CD4-positive, alpha-beta memory T cell (primary cell): ENCODE measurements at regions of chr4 and their contacts with region 1.

Region 1: GRCh38 chr4:48127682-48128394 is 6.2 kb downstream of the TXK start:
- DNase-seq: peak; percentile 61 to 72 (median 69)
- H3K4me3 ChIP-seq: peak overlapping the region; percentile 0 to 41
- H3K4me3 Mint-ChIP-seq: peak overlapping the region; percentile 71 to 95 (median 84)
- H3K27ac ChIP-seq: peak overlapping the region; percentile 46
- H3K27ac Mint-ChIP-seq: peak overlapping the region; percentile 78 to 96 (median 94)
- H3K4me1 ChIP-seq: peaks cover 89% of the 10 kb centered on the region
- H3K4me1 Mint-ChIP-seq: peaks cover 65 to 98% (median 83%) of the 10 kb centered on the region in 4 donors
- H3K27me3 ChIP-seq: no peaks in the 10 kb centered on the region
- H3K27me3 Mint-ChIP-seq: no peaks in the 10 kb centered on the region

Region 2: DNA sequence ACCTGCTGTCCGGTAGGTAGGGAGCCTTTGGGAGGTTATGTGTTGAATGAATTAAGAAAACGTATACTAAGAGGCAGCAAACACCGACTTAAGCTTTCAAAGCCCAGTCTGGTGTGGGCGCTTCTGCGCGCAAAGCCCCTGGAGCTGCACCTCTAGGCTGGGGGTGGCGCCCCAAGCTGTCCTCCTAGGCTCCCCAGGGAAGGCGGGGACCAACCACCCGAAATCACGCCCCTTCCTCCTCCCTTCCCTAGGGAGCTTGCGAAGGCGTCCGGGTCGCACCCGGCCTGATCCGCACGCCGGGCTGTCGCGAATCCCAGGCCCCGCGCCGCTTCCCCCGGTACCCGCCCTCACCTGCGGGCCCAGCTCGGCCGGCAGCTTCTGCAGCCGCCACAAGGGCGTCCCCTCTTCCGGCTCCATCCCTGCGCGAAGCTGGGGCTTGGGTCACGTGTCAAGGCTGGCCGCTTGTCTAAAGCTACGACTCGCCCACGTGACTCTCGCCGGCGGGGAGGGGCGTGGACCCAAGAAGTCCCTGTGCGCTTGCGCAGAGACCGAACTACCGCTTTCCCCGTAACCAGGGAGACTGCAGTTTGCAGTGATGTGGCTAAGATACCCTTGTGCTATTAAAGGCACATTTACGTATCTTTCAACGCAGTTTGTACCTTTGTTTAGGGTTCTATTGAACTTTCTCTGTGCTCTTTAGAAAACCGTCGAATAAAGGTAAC is 664.4 kb before region 1 on chr4 and contains the start of gene COMMD8:
- CTCF ChIA-PET with region 1: no interaction called
- POLR2A ChIA-PET with region 1: interaction called, 3 read pairs
- intact Hi-C with region 1: loop called (anchors 10 kb)
- DNase-seq: peak; percentile 96 to 98 (median 97)
- H3K4me3 ChIP-seq: peak within 1 kb of the TSS; percentile 48 to 92
- H3K4me3 Mint-ChIP-seq: peak within 1 kb of the TSS; percentile 88 to 92 (median 90)
- H3K27ac ChIP-seq: peak within 1 kb of the TSS; percentile 79
- H3K27ac Mint-ChIP-seq: peak within 1 kb of the TSS; percentile 90 to 99 (median 96)
- H3K4me1 ChIP-seq: peaks cover 24% of the 10 kb centered on the region
- H3K4me1 Mint-ChIP-seq: peaks cover 26 to 42% (median 36%) of the 10 kb centered on the region in 4 donors
- H3K27me3 ChIP-seq: no peaks in the 10 kb centered on the region
- H3K27me3 Mint-ChIP-seq: peaks cover 0 to 2% of the 10 kb centered on the region in 2 donors
- total RNA-seq, gene COMMD8: 14.6 to 18.3 TPM

Region 3: DNA sequence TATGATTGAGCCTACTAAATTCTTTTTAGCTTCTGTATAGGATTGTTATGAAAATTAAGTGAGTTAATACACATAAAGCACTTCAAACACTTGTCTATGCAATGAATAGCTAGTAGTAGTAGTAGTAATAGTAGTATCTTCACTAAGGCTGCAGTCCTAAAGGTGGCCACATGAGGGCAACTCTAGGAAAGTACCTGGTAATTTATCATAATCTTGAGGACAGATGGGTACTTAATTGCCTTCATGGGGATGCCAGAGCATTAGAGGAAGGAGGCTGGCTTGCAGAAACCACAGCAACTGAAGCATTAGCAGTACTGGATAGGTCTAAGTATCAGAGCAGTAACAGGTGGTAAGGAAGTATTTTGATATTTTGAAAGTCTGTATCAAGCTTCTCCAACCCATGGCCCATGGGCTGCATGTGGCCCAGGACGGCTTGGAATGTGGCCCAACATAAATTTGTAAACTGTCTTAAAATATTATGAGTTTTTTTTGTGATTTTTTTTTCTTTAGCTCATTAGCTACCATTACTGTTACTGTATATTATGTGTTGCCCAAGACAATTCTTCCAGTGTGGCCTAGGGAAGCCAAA is 93.9 kb before region 1 on chr4:
- CTCF ChIA-PET with region 1: interaction called, 12 read pairs
- POLR2A ChIA-PET with region 1: no interaction called
- intact Hi-C with region 1: no loop called
- DNase-seq: peak; percentile 49 to 67 (median 58)
- H3K4me3 ChIP-seq: no peak overlapping the region
- H3K4me3 Mint-ChIP-seq: no peak overlapping the region
- H3K27ac ChIP-seq: no peak overlapping the region
- H3K27ac Mint-ChIP-seq: no peak overlapping the region
- H3K4me1 ChIP-seq: no peaks in the 10 kb centered on the region
- H3K4me1 Mint-ChIP-seq: peaks cover 2 to 12% (median 3%) of the 10 kb centered on the region in 4 donors
- H3K27me3 ChIP-seq: no peaks in the 10 kb centered on the region
- H3K27me3 Mint-ChIP-seq: no peaks in the 10 kb centered on the region

Region 4: DNA sequence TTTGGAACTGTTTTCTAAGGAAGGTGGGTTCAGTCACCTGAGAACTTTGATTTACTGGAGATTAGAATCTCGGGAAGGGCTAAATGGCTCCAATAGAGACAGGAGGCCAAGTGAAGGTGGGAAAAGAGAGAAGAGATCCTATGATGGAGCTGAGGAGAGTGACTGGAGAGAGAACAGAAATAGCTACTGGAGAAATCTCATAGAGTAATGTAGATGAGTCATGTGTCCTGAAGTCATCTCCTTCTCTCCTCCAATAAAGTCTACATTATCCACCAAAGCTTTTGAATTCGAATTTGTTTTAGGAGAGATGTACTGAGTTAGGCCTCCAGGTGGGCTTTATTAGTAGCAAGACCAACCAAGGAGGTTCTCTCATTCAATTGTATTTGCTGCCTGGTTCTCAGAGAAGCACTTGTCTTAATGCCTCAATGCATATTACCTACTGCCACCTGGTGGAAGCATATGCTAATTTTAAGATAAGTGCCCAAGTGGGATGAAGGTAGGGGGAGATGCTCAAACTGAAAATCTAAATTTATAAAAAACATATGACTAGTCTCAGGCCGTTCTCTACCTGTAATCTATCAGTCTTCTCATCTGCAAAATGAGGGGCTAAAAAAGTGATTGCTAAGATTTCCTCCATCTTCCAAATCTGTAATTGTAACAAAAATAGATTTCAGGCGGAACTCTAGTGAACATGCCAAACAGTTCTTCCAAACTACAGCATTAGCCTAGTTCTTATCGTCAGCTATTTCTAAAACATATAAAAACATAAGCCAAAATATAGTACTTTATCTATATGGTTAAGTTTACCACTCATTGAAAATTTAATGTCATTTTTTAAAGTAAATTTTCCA is 18.2 kb before region 1 on chr4:
- CTCF ChIA-PET with region 1: interaction called, 28 read pairs
- POLR2A ChIA-PET with region 1: interaction called, 4 read pairs
- intact Hi-C with region 1: loop called (anchors 2 kb)
- DNase-seq: peak in 4 of 5 donors; percentile 42 to 50 (median 48)
- H3K4me3 ChIP-seq: no peak overlapping the region
- H3K4me3 Mint-ChIP-seq: no peak overlapping the region
- H3K27ac ChIP-seq: no peak overlapping the region
- H3K27ac Mint-ChIP-seq: peak overlapping the region in 3 of 7 donors; percentile 7 to 52 (median 11)
- H3K4me1 ChIP-seq: peaks cover 38% of the 10 kb centered on the region
- H3K4me1 Mint-ChIP-seq: peaks cover 25 to 35% (median 31%) of the 10 kb centered on the region in 4 donors
- H3K27me3 ChIP-seq: no peaks in the 10 kb centered on the region
- H3K27me3 Mint-ChIP-seq: no peaks in the 10 kb centered on the region

Region 5: DNA sequence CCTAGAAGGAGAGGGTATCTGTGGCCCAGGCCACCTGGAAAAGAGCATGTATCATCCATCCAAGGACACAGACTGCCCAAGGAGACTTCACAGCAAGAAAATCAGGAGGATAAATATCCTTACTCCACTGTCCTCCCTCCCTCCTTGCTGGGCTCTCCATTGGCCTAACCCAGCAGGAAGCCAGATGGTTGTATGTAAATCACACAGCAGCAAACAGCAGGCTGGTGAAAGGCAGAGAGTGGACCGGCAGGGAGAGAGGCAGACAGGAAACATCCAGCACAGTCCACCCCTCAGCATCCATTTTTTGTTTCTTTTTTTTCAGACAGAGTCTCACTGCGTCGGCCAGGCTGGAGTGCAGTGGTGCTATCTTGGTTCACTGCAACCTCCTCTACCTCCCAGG is 11.3 kb before region 1 on chr4:
- CTCF ChIA-PET with region 1: interaction called, 22 read pairs
- POLR2A ChIA-PET with region 1: interaction called, 4 read pairs
- intact Hi-C with region 1: loop called (anchors 2 kb)
- DNase-seq: no peak
- H3K4me3 ChIP-seq: no peak overlapping the region
- H3K4me3 Mint-ChIP-seq: peak overlapping the region in 1 of 8 donors; percentile 4
- H3K27ac ChIP-seq: no peak overlapping the region
- H3K27ac Mint-ChIP-seq: peak overlapping the region; percentile 15 to 71 (median 37)
- H3K4me1 ChIP-seq: peaks cover 76% of the 10 kb centered on the region
- H3K4me1 Mint-ChIP-seq: peaks cover 58 to 71% (median 65%) of the 10 kb centered on the region in 4 donors
- H3K27me3 ChIP-seq: no peaks in the 10 kb centered on the region
- H3K27me3 Mint-ChIP-seq: no peaks in the 10 kb centered on the region

Region 6: DNA sequence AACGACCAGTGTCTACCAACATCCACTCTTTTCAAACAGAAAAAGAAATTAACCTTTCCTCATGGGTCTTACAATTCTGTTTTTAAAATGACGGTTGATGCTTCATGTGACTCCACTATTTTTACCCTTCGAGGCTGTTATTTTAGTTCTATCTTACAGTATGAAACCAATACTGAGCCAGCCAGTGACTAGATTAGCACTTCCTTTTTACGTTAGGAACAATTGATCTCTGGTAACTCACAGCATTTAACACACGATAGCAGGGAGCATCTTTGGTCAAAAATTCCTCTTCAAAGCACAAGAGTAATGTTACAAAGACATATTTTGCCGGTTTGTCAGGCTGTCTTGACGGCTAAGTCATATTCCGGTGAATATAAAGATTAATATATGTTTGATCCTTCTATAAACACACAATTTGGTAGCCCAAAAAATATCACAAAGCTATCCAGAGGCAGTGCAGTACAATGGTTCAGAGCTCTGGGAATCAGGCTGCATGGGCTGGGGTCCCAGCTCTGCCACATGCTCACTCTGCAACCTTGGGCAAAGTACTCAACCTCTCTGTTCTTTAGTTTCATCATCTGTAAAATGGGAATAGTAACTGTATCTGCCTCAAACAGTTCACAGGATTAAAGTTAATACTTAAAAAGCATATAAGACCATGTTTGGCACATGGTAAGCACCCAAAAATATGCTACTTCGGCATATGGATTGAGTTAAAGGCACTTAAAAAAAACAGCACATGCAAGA is 69.1 kb after region 1 on chr4:
- CTCF ChIA-PET with region 1: no interaction called
- POLR2A ChIA-PET with region 1: no interaction called
- intact Hi-C with region 1: no loop called
- DNase-seq: no peak
- H3K4me3 ChIP-seq: no peak overlapping the region
- H3K4me3 Mint-ChIP-seq: no peak overlapping the region
- H3K27ac ChIP-seq: no peak overlapping the region
- H3K27ac Mint-ChIP-seq: no peak overlapping the region
- H3K4me1 ChIP-seq: no peaks in the 10 kb centered on the region
- H3K4me1 Mint-ChIP-seq: peaks cover 1 to 10% (median 7%) of the 10 kb centered on the region in 4 donors
- H3K27me3 ChIP-seq: no peaks in the 10 kb centered on the region
- H3K27me3 Mint-ChIP-seq: peaks cover 4 to 7% of the 10 kb centered on the region in 2 donors

Region 7: GRCh38 chr4:48269861-48270522 is 142.2 kb after region 1 on chr4:
- CTCF ChIA-PET with region 1: interaction called, 15 read pairs
- POLR2A ChIA-PET with region 1: interaction called, 4 read pairs
- intact Hi-C with region 1: loop called (anchors 5 kb)
- DNase-seq: peak; percentile 74 to 86 (median 77)
- H3K4me3 ChIP-seq: peak overlapping the region; percentile 50 to 59
- H3K4me3 Mint-ChIP-seq: peak overlapping the region; percentile 91 to 98 (median 96)
- H3K27ac ChIP-seq: peak overlapping the region; percentile 48
- H3K27ac Mint-ChIP-seq: peak overlapping the region; percentile 82 to 93 (median 90)
- H3K4me1 ChIP-seq: peaks cover 14% of the 10 kb centered on the region
- H3K4me1 Mint-ChIP-seq: peaks cover 9 to 24% (median 10%) of the 10 kb centered on the region in 4 donors
- H3K27me3 ChIP-seq: no peaks in the 10 kb centered on the region
- H3K27me3 Mint-ChIP-seq: no peaks in the 10 kb centered on the region

Region 8: DNA sequence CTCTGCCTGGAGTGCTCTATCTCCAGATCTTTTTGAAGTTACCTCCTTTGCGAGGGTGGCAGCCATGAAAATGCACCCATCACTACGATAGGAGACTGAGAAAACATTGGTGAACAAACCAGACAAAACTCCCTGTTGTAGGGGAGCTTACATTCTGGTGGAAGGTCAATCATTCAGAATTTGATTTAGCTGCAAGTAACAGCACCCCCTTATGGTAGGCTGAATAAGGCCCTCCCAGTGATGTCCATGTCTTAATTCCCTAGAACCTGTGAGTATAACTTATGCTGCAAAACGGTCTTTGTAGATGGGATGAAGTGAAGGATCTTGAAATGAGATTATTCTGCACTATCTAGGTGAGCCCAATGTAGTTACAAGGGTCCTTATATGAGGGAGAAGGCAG is 147.4 kb after region 1 on chr4:
- CTCF ChIA-PET with region 1: interaction called, 15 read pairs
- POLR2A ChIA-PET with region 1: interaction called, 4 read pairs
- intact Hi-C with region 1: loop called (anchors 5 kb)
- DNase-seq: peak in 1 of 5 donors; percentile 10
- H3K4me3 ChIP-seq: no peak overlapping the region
- H3K4me3 Mint-ChIP-seq: no peak overlapping the region
- H3K27ac ChIP-seq: no peak overlapping the region
- H3K27ac Mint-ChIP-seq: no peak overlapping the region
- H3K4me1 ChIP-seq: peaks cover 4% of the 10 kb centered on the region
- H3K4me1 Mint-ChIP-seq: peaks cover under 1 to 7% (median 3%) of the 10 kb centered on the region in 4 donors
- H3K27me3 ChIP-seq: no peaks in the 10 kb centered on the region
- H3K27me3 Mint-ChIP-seq: peaks cover 9 to 16% of the 10 kb centered on the region in 2 donors